Activated CD4-positive, alpha-beta T cell treated with anti-CD3 and anti-CD28 coated beads for 36 hours (primary cell): ENCODE measurements at regions of chr6 and their contacts with region 1.

Region 1: DNA sequence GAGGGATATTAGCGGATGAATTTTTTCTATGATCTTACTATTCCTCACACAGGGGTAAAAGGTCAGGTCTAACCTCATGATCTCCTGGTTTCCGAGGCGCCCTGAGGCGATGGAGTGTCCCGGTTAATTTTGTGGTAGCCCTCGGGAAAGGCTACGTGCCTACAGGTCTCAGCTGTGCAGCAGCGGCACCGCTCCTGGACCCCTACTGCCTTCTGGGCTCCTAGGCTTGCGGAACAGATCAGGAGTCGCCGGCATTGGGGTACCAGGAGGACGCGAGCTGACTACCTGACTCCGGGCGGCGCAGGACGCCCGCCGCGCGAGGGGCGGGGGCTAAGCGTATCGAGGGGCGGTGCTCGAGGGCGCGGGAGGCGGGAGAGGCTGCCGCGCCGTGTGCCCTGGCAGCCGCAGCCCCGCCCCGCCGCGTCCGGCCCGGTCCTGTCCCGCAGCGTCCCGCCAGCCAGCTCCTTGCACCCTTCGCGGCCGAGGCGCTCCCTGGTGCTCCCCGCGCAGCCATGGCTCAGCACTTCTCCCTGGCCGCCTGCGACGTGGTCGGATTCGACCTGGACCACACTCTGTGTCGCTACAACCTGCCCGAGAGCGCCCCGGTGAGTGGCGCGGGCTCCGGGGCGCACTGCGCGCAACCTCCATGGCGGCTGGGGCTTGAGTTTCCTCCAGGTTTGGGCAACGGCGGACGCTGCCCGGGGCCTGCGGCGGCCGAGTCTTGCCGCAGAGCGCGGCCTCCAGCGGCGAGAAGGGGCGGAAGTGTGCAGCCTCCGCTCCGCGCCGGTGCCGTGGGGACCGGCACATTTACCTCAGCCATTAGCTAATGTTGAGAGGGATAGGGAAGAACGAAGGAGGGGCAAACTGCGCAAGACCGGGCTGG is at the start of gene NT5DC1:
- DNase-seq: peak; percentile 92
- ATAC-seq: peak; percentile 93
- H3K4me3 Mint-ChIP-seq: peak within 1 kb of the TSS; percentile 86
- H3K27ac Mint-ChIP-seq: peak within 1 kb of the TSS; percentile 88
- H3K4me1 Mint-ChIP-seq: peaks cover 50% of the 10 kb centered on the region
- H3K27me3 Mint-ChIP-seq: no peaks in the 10 kb centered on the region
- total RNA-seq, gene NT5DC1: 39.4 to 42.4 TPM

Region 2: DNA sequence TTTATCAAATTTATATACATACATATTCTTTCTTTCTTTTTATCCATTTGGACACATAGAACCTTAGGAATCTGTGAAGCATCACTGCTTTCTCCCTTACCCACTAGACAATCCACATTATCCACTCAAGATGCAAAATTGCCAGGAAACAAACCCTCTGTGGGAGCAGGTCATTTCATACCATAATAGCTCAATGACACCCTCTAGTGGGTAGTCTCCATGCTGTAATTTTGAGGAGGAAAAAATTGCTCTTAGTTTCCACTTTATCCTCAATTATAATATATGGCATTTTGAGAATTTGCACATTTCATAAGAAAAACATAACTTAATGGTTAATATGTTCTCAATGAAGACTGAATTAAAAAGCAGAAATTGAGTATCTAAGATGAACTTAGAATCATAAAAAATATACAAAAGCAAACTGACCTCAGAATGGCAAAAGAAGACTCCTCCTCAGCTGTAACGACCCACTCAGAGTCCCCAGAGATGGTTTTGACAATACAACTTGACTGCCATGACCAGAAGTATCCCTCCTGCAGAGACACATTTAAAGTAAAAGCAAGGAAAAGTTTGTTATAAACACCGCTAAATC is 204.0 kb before region 1 on chr6:
- CTCF ChIA-PET with region 1: no interaction called
- POLR2A ChIA-PET with region 1: no interaction called
- intact Hi-C with region 1: loop called in 1 of 2 experiments (anchors 10 kb)
- DNase-seq: no peak
- ATAC-seq: no peak
- H3K4me3 Mint-ChIP-seq: no peak overlapping the region
- H3K27ac Mint-ChIP-seq: no peak overlapping the region
- H3K4me1 Mint-ChIP-seq: no peaks in the 10 kb centered on the region
- H3K27me3 Mint-ChIP-seq: peaks cover 4% of the 10 kb centered on the region

Region 3: GRCh38 chr6:116111552-116112528 is 11.2 kb after region 1 on chr6:
- CTCF ChIA-PET with region 1: interaction called, 11 read pairs
- POLR2A ChIA-PET with region 1: interaction called, 3 read pairs
- intact Hi-C with region 1: no loop called
- DNase-seq: peak; percentile 65
- ATAC-seq: peak; percentile 78
- H3K4me3 Mint-ChIP-seq: no peak overlapping the region
- H3K27ac Mint-ChIP-seq: no peak overlapping the region
- H3K4me1 Mint-ChIP-seq: no peaks in the 10 kb centered on the region
- H3K27me3 Mint-ChIP-seq: no peaks in the 10 kb centered on the region

Region 4: GRCh38 chr6:116279260-116280063 is 178.8 kb after region 1 on chr6 and contains the start of gene TSPYL1:
- CTCF ChIA-PET with region 1: no interaction called
- POLR2A ChIA-PET with region 1: no interaction called
- intact Hi-C with region 1: loop called in 1 of 2 experiments (anchors 5 kb)
- DNase-seq: peak; percentile 97
- ATAC-seq: peak; percentile 94
- H3K4me3 Mint-ChIP-seq: peak within 1 kb of the TSS; percentile 93
- H3K27ac Mint-ChIP-seq: peak within 1 kb of the TSS; percentile 98
- H3K4me1 Mint-ChIP-seq: peaks cover 32% of the 10 kb centered on the region
- H3K27me3 Mint-ChIP-seq: no peaks in the 10 kb centered on the region
- total RNA-seq, gene TSPYL1: 37.5 to 38.2 TPM

Region 5: GRCh38 chr6:116667623-116668022 is 567.0 kb after region 1 on chr6:
- CTCF ChIA-PET with region 1: no interaction called
- POLR2A ChIA-PET with region 1: no interaction called
- intact Hi-C with region 1: loop called in 1 of 2 experiments (anchors 5 kb)
- DNase-seq: no peak
- ATAC-seq: no peak
- H3K4me3 Mint-ChIP-seq: peak overlapping the region; percentile 89
- H3K27ac Mint-ChIP-seq: peak overlapping the region; percentile 96
- H3K4me1 Mint-ChIP-seq: peaks cover 38% of the 10 kb centered on the region
- H3K27me3 Mint-ChIP-seq: no peaks in the 10 kb centered on the region

Region 6: DNA sequence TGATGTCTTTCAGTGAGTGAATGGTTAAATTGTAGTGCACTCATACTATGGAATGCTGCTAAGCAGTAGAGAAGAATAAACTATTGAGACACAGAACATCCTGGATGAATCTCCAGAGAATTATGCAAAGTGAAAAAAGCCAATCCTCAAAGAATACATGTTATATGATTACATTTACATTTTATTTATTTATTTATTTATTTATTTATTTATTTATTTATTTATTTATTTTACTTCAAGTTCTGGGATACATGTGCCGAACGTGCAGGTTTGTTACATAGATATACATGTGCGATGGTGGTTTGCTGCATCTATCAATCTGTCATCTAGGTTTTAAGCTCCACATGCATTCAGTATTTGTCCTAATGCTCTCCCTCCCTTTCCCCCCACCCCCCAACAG is 988.9 kb after region 1 on chr6:
- CTCF ChIA-PET with region 1: no interaction called
- POLR2A ChIA-PET with region 1: no interaction called
- intact Hi-C with region 1: no loop called
- DNase-seq: no peak
- ATAC-seq: no peak
- H3K4me3 Mint-ChIP-seq: no peak overlapping the region
- H3K27ac Mint-ChIP-seq: no peak overlapping the region
- H3K4me1 Mint-ChIP-seq: no peaks in the 10 kb centered on the region
- H3K27me3 Mint-ChIP-seq: no peaks in the 10 kb centered on the region